ENCODE measurements at regions of chr11 and their contacts with region 1.

Region 1: DNA sequence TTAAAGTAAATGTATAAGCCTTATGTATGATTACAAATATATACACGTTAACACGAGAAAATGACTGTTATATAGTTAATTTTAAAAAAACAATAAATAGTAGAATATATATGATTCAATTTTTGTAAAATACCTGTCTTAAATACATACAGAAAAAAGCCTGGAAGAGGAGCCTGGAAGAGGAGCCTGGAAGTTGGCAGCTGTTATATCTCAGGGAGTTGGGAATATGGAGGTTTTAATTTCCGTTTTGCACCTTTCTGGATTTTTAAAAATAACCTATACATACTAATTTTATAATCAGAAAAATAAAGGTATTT is 111.6 kb downstream of the WT1 start:
- DNase-seq: no peak
- H3K4me3 ChIP-seq: no peak overlapping the region
- H3K27ac ChIP-seq: no peak overlapping the region
- H3K4me1 ChIP-seq: no peaks in the 10 kb centered on the region
- H3K27me3 ChIP-seq: peaks cover 0 to 4% (median 0%) of the 10 kb centered on the region in 5 experiments

Region 2: DNA sequence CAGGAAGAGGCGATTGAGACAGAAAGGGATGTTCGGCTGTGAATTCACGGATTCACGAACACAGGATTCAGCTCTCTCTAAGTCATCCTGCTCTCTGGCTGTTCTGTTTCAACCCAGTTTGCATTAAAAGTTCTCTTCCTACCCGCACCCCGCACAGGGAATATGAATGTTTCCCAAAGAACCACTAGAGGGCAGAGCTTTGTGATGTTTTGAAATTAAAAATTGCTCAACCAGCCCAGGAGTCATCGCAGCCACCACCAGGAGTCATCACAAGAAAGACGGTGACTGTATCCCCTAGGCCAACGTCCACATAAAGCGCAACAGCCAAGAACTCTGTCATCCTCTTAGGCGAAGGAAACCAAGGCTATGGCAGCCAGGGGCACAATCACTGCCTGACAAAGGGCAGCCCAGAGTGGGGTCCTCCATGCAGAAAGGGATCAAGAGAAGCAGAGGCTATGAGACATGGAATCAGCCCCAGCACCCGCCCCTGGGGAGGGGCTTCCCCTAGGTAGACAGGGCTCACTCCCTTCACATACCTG is 10.8 kb before region 1 on chr11:
- CTCF ChIA-PET with region 1: interaction called, 24 read pairs
- POLR2A ChIA-PET with region 1: no interaction called
- DNase-seq: peak; percentile 75 to 84 (median 81)
- H3K4me3 ChIP-seq: no peak overlapping the region
- H3K27ac ChIP-seq: no peak overlapping the region
- H3K4me1 ChIP-seq: peaks cover 0 to 11% (median 8%) of the 10 kb centered on the region in 4 experiments
- H3K27me3 ChIP-seq: peaks cover 0 to 2% (median 0%) of the 10 kb centered on the region in 5 experiments